ENCODE measurements at regions of chr5 and their contacts with region 1.

Region 1: DNA sequence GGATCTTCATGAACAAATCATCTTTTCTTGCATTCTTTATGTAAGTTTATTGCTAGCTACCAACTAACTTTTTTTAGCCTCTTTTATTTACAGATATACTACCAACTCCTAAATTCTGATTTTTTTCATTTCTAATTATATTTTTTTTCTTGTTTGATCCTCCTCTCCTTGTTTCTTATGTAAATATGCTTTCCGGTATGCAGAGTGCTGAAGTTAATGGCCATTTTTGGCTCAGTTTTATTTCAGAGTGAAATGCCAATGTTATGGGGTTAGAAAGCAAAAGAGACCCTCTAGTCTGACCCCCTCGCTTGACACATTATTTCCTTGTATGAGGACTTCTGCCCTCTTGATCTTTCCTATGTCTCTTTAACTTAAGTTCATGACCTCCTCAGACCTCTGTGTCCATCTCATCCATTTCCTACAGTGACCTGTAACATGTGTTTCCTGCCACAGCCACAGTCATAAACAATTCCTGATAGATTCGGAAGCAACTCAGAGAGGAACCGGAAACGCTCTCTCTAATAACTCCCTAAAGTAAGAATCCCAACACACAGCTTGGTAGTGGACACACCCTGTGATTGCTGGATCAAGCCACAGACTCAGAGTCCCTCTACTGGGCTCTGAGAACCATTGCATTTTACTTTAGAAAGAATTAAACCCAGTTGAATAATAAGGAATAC is 42.9 kb upstream of the AFAP1L1 start:
- DNase-seq: no peak
- ATAC-seq: peak; percentile 94
- H3K4me3 ChIP-seq: no peak overlapping the region
- H3K27ac ChIP-seq: peak overlapping the region; percentile 42
- H3K4me1 ChIP-seq: peaks cover 24% of the 10 kb centered on the region
- H3K27me3 ChIP-seq: no peaks in the 10 kb centered on the region
- CTCF ChIP-seq: peak; percentile 75

Region 2: GRCh38 chr5:149133795-149134780 is 94.7 kb before region 1 on chr5:
- intact Hi-C with region 1: loop called (anchors 10 kb)
- DNase-seq: no peak
- ATAC-seq: peak; percentile 71 to 84
- H3K4me3 ChIP-seq: no peak overlapping the region
- H3K27ac ChIP-seq: no peak overlapping the region
- H3K4me1 ChIP-seq: peaks cover 17% of the 10 kb centered on the region
- H3K27me3 ChIP-seq: no peaks in the 10 kb centered on the region
- CTCF ChIP-seq: no peak

Measured in lower lobe of right lung (tissue), 2 donors.